Activated CD4-positive, alpha-beta T cell treated with anti-CD3 and anti-CD28 coated beads, Interleukin-2, amount 10 ng/mL, durations not matched to agents 24 days and 14 days (primary cell): ENCODE measurements at regions of chr21 and their contacts with region 1.

Region 1: DNA sequence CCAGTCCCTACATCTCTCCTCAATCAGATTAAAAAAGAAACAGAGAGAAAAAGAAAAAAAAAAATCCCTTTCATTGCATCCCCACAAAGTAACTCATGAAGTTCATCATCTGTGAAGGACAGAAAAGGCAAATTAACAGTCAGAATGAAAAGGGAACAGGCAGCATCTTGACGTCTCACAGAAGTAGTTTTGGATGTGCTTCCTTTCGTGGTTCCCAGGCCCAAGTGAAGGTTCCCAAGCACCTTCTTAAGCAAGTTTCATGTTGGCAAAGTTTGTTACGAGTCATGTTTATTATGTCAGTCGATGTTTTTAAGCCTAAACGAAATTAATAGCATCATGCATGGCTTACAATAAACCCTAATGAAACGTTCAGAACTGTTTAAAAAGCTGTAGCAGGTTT is 475.2 kb downstream of the SETD4 start:
- DNase-seq: no peak
- H3K4me3 Mint-ChIP-seq: no peak overlapping the region
- H3K27ac Mint-ChIP-seq: no peak overlapping the region
- H3K4me1 Mint-ChIP-seq: peaks cover 3% of the 10 kb centered on the region
- H3K27me3 Mint-ChIP-seq: peaks cover 8% of the 10 kb centered on the region

Region 2: DNA sequence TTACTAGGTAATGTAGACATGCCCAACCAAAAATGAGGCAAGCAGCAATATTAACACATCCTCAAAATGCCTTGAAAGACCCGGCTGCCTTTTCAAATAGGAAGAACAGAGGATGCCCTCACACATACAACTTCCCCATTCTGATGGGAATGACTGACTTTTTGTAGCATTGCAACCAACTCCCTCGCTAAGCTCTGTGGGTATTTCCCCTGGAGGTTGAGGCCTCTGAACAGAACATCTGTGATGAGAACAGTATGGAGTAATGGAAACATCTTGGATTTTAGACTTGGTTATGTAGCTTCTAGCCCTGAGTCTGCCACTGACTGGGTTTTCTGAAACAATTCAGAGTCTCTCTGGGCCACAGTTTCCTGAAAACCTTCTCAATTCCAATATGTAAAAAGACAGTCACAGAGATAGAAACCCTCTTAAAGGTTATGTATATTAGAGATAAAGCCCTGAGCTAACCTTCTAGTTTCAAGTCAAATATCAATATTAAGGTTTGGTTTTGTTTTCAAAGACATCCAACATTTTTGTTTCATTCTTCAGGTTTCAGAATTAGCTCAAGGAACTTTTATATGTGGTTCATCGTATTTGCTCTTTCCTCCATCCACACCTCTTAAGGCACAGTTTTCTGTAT is 163.6 kb after region 1 on chr21:
- intact Hi-C with region 1: loop called (anchors 5 kb)
- DNase-seq: no peak
- H3K4me3 Mint-ChIP-seq: no peak overlapping the region
- H3K27ac Mint-ChIP-seq: no peak overlapping the region
- H3K4me1 Mint-ChIP-seq: peaks cover 7% of the 10 kb centered on the region
- H3K27me3 Mint-ChIP-seq: peaks cover 7% of the 10 kb centered on the region